PC-3 (cell line): ENCODE measurements at regions of chr6 and their contacts with region 1.

Region 1: DNA sequence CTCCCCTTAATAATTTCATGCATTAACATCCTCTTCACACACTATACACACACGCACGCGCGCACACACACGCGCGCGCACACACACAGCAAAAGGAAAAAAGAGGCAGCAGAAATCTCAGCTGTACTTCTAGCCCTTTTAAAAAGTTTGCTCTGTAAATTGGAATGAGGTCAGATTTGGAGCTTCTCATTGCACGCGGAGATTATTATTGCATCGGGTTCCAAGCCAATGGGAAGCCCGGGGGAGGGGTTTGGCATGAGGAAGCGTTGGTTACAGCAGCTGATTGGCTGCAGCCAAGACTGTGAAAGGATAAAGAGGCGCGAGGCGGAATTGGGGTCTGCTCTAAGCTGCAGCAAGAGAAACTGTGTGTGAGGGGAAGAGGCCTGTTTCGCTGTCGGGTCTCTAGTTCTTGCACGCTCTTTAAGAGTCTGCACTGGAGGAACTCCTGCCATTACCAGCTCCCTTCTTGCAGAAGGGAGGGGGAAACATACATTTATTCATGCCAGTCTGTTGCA is at the start of gene SOX4:
- DNase-seq: peak; percentile 98
- ATAC-seq: peak; percentile 65
- H3K4me3 ChIP-seq: peak within 1 kb of the TSS; percentile 99
- H3K27ac ChIP-seq: peak within 1 kb of the TSS; percentile 69
- H3K4me1 ChIP-seq: peaks cover 26% of the 10 kb centered on the region
- H3K27me3 ChIP-seq: no peaks in the 10 kb centered on the region
- CTCF ChIP-seq: no peak
- total RNA-seq, gene SOX4: 46.1 and 62.8 TPM in 2 replicates

Region 2: GRCh38 chr6:20789162-20789561 is 804.3 kb before region 1 on chr6:
- CTCF ChIA-PET with region 1: no interaction called
- POLR2A ChIA-PET with region 1: interaction called, 3 read pairs
- intact Hi-C with region 1: loop called (anchors 5 kb)
- DNase-seq: no peak
- ATAC-seq: peak; percentile 55; the same call in 1 of the 2 replicates
- H3K4me3 ChIP-seq: no peak overlapping the region
- H3K27ac ChIP-seq: no peak overlapping the region
- H3K4me1 ChIP-seq: no peaks in the 10 kb centered on the region
- H3K27me3 ChIP-seq: no peaks in the 10 kb centered on the region
- CTCF ChIP-seq: no peak

Region 3: DNA sequence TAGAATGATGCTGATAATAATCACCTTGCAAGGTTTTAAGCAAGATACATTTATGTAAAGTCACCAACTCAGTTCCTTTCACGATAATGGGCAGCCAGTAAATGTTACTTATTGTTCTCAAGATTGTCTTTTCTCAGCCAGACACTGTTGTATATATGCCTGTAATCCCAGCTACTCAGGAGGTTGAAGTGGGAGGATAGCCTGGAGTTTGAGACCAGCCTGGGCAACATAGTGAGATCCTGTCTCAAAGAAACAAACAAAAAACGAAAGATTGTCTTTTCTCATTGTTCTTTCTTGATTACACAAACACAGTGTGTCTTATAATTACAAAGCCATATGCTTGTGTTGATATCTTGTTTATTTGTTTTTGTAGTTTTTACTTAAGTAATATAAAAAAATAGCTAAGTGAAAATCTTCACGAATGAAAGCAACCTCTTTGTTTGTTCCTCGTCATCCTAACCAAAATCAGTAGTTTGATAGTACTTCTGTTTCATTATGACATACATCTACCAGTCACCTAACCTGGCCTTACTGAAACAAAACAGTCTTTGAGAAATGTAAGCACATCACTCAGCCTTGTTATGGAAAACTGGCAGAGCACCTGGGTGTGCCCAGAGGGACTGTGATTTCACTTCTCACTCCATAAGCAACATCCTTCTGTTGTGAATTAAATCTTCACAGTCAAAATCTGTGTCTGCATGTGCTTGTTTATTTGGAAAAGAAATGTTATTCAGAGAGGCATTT is 436.1 kb before region 1 on chr6:
- CTCF ChIA-PET with region 1: no interaction called
- POLR2A ChIA-PET with region 1: no interaction called
- intact Hi-C with region 1: no loop called
- DNase-seq: no peak
- ATAC-seq: no peak
- H3K4me3 ChIP-seq: no peak overlapping the region
- H3K27ac ChIP-seq: no peak overlapping the region
- H3K4me1 ChIP-seq: no peaks in the 10 kb centered on the region
- H3K27me3 ChIP-seq: no peaks in the 10 kb centered on the region
- CTCF ChIP-seq: no peak

Region 4: GRCh38 chr6:21227486-21227885 is 366.0 kb before region 1 on chr6:
- CTCF ChIA-PET with region 1: no interaction called
- POLR2A ChIA-PET with region 1: interaction called, 6 read pairs
- intact Hi-C with region 1: loop called (anchors 2 kb)
- DNase-seq: peak; percentile 93
- ATAC-seq: peak; percentile 98
- H3K4me3 ChIP-seq: peak overlapping the region; percentile 9; the same call in 1 of the 2 replicates
- H3K27ac ChIP-seq: peak overlapping the region; percentile 78
- H3K4me1 ChIP-seq: peaks cover 33% of the 10 kb centered on the region
- H3K27me3 ChIP-seq: no peaks in the 10 kb centered on the region
- CTCF ChIP-seq: 0 out of 2 replicates have a peak, but pooled peaks have one; percentile 13

Region 5: GRCh38 chr6:21615504-21615903 is 22.0 kb after region 1 on chr6:
- CTCF ChIA-PET with region 1: no interaction called
- POLR2A ChIA-PET with region 1: no interaction called
- intact Hi-C with region 1: no loop called
- DNase-seq: no peak
- ATAC-seq: no peak
- H3K4me3 ChIP-seq: no peak overlapping the region
- H3K27ac ChIP-seq: no peak overlapping the region
- H3K4me1 ChIP-seq: peaks cover 5% of the 10 kb centered on the region; the same call in 1 of the 2 replicates
- H3K27me3 ChIP-seq: no peaks in the 10 kb centered on the region
- CTCF ChIP-seq: no peak

Region 6: DNA sequence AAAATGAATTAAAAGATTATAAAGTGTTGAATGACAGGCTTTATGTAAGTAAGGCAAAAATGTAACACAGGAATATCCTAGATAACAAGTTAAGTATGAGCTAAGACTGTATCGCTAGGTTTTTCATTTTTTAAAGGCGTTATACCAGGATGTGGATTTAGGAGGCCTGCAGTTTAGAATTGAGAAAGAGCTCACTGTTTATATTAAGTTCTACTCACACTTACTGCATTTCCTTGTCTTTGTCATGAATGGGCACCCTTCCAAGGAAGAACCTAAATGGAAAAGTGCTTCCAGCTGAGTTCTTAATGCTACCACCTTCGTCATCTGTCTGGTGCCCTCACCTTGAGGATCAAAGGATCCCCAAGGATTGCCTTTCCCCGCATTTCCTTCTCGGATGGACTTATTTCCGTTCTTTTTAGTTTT is 148.8 kb after region 1 on chr6:
- CTCF ChIA-PET with region 1: no interaction called
- POLR2A ChIA-PET with region 1: no interaction called
- intact Hi-C with region 1: loop called (anchors 2 kb)
- DNase-seq: peak; percentile 91
- ATAC-seq: peak; percentile 71
- H3K4me3 ChIP-seq: peak overlapping the region; percentile 33
- H3K27ac ChIP-seq: peak overlapping the region; percentile 52
- H3K4me1 ChIP-seq: peaks cover 55% of the 10 kb centered on the region
- H3K27me3 ChIP-seq: no peaks in the 10 kb centered on the region
- CTCF ChIP-seq: no peak

Region 7: GRCh38 chr6:22082218-22082617 is 488.7 kb after region 1 on chr6:
- CTCF ChIA-PET with region 1: no interaction called
- POLR2A ChIA-PET with region 1: interaction called, 14 read pairs
- intact Hi-C with region 1: no loop called
- DNase-seq: peak; percentile 35
- ATAC-seq: peak; percentile 88
- H3K4me3 ChIP-seq: no peak overlapping the region
- H3K27ac ChIP-seq: no peak overlapping the region
- H3K4me1 ChIP-seq: no peaks in the 10 kb centered on the region
- H3K27me3 ChIP-seq: no peaks in the 10 kb centered on the region
- CTCF ChIP-seq: no peak

Region 8: GRCh38 chr6:22363714-22364239 is 770.3 kb after region 1 on chr6:
- CTCF ChIA-PET with region 1: no interaction called
- POLR2A ChIA-PET with region 1: interaction called, 5 read pairs
- intact Hi-C with region 1: loop called (anchors 5 kb)
- DNase-seq: no peak
- ATAC-seq: no peak; the same call in 1 of the 2 replicates
- H3K4me3 ChIP-seq: 0 out of 2 replicates have a peak overlapping the region, but pooled peaks have one; percentile 10
- H3K27ac ChIP-seq: peak overlapping the region; percentile 94
- H3K4me1 ChIP-seq: peaks cover 44% of the 10 kb centered on the region
- H3K27me3 ChIP-seq: no peaks in the 10 kb centered on the region
- CTCF ChIP-seq: no peak

Region 9: GRCh38 chr6:22873513-22874136 is 1280.2 kb after region 1 on chr6:
- CTCF ChIA-PET with region 1: interaction called, 12 read pairs
- POLR2A ChIA-PET with region 1: no interaction called
- intact Hi-C with region 1: no loop called
- DNase-seq: no peak
- ATAC-seq: no peak
- H3K4me3 ChIP-seq: no peak overlapping the region
- H3K27ac ChIP-seq: no peak overlapping the region
- H3K4me1 ChIP-seq: no peaks in the 10 kb centered on the region
- H3K27me3 ChIP-seq: no peaks in the 10 kb centered on the region
- CTCF ChIP-seq: no peak